Mammary epithelial cell (primary cell): ENCODE measurements at regions of chr17 and their contacts with region 1.

Region 1: GRCh38 chr17:69870091-69870530 is 204.9 kb upstream of the KCNJ16 start:
- DNase-seq: peak; percentile 83
- H3K4me3 ChIP-seq: no peak overlapping the region
- H3K27ac ChIP-seq: peak overlapping the region; percentile 91
- H3K4me1 ChIP-seq: peaks cover 48% of the 10 kb centered on the region
- H3K27me3 ChIP-seq: no peaks in the 10 kb centered on the region
- CTCF ChIP-seq: no peak

Region 2: GRCh38 chr17:69733171-69734012 is 136.7 kb before region 1 on chr17:
- CTCF ChIA-PET with region 1: no interaction called
- dilution Hi-C with region 1: no loop called
- in situ Hi-C with region 1: no loop called
- intact Hi-C with region 1: loop called (anchors 2 kb)
- DNase-seq: peak; percentile 93
- H3K4me3 ChIP-seq: no peak overlapping the region
- H3K27ac ChIP-seq: peak overlapping the region; percentile 53
- H3K4me1 ChIP-seq: peaks cover 43% of the 10 kb centered on the region
- H3K27me3 ChIP-seq: no peaks in the 10 kb centered on the region
- CTCF ChIP-seq: peak in 1 of 2 donors; percentile 6

Region 3: DNA sequence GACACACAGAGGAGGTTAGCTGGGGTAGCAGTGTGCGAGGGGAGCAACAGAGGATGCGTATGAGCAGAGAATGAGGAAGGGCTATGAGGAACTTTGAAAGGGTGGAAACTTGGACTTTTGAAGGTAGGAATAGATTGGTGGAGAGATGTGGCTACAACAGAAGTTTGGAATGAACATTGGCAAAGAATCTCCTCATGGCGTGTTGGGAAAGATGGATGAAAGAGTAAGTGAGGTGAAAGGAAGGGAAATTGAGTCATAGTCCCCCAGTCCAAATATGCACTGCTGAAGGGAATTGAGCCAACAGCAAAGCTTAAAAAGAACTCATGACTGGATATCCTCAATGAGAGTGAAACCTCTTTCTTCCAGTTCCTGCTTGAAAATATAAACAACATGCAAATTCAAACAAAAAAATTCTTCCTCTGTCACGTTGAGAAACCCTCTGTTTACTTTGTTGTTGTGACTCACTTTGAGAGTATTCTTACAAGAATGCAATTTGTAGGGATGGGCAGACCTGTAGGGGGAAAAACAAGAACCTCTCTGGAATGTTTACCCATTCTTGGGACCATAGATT is 108.3 kb before region 1 on chr17:
- CTCF ChIA-PET with region 1: no interaction called
- dilution Hi-C with region 1: loop called (anchors 10 kb)
- in situ Hi-C with region 1: no loop called
- intact Hi-C with region 1: no loop called
- DNase-seq: peak; percentile 87
- H3K4me3 ChIP-seq: no peak overlapping the region
- H3K27ac ChIP-seq: peak overlapping the region; percentile 88
- H3K4me1 ChIP-seq: peaks cover 44% of the 10 kb centered on the region
- H3K27me3 ChIP-seq: no peaks in the 10 kb centered on the region
- CTCF ChIP-seq: no peak

Region 4: DNA sequence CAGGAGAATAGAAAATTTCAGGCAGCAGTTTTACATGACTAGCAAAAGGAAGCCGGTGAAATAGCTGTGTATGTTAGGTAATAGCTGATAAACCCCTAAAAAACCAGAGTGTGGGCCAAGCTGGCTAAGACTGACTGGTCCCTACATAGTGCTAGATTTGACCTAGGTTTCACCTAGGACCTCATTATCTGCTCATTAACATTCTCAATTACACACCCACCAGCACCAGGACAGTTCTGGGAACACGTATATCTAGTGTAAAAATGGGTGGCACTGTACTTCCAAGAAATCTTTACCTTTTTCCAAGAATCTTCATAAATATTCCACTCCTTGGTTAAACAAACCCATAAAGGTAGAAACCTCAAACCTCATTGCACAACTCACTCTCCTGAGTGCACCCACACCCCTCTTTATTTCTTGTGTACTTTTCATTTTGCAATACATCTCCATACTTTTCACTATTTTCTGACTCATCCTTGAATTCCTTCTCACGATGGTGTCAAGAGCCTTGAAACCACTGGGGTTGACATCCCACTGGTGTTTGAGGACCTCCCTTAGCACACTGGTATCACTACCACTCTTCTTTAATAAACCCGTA is 57.8 kb before region 1 on chr17:
- CTCF ChIA-PET with region 1: no interaction called
- dilution Hi-C with region 1: no loop called
- in situ Hi-C with region 1: no loop called
- intact Hi-C with region 1: loop called (anchors 2 kb)
- DNase-seq: peak; percentile 78
- H3K4me3 ChIP-seq: no peak overlapping the region
- H3K27ac ChIP-seq: peak overlapping the region; percentile 32
- H3K4me1 ChIP-seq: peaks cover 30% of the 10 kb centered on the region
- H3K27me3 ChIP-seq: no peaks in the 10 kb centered on the region
- CTCF ChIP-seq: no peak

Region 5: DNA sequence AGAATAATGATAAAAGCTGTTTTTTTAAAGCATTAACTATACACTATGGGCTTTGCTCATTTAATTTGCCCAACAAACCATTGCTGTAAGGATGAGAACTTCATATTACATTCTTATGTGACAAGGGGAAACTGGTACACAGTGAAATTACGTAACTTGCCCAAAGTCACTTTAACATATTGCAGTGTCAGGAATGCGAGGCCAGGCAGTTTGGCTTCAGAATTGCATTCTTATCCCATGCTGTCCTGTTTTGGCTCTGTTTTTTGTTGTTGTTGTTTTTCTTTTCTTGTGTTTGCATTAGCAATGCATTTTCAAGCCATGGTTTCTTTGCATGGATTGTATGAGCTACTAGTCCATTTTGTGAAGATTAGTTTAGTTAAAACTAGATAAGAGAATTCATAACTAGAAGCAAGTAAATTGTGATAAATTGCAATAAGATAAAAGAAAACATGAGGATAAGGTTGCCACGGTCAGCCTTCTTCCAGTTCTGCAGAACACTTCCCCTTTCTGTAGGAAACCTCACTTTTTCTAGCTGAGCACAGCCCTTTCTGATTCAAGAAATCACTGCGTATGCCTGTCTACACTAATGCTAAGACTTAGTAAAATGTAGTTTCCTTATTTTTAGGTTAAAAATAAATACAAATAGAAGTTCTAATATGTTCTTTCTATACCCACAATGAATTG is 16.4 kb before region 1 on chr17:
- CTCF ChIA-PET with region 1: interaction called, 13 read pairs
- dilution Hi-C with region 1: no loop called
- in situ Hi-C with region 1: no loop called
- intact Hi-C with region 1: no loop called
- DNase-seq: no peak
- H3K4me3 ChIP-seq: no peak overlapping the region
- H3K27ac ChIP-seq: no peak overlapping the region
- H3K4me1 ChIP-seq: peaks cover 12% of the 10 kb centered on the region
- H3K27me3 ChIP-seq: no peaks in the 10 kb centered on the region
- CTCF ChIP-seq: no peak

Region 6: GRCh38 chr17:70137451-70138230 is 267.5 kb after region 1 on chr17:
- CTCF ChIA-PET with region 1: no interaction called
- dilution Hi-C with region 1: no loop called
- in situ Hi-C with region 1: no loop called
- intact Hi-C with region 1: loop called (anchors 5 kb)
- DNase-seq: peak; percentile 84
- H3K4me3 ChIP-seq: peak overlapping the region; percentile 39 to 46 (median 39)
- H3K27ac ChIP-seq: peak overlapping the region; percentile 95
- H3K4me1 ChIP-seq: peaks cover 20% of the 10 kb centered on the region
- H3K27me3 ChIP-seq: no peaks in the 10 kb centered on the region
- CTCF ChIP-seq: peak in 1 of 2 donors; percentile 12